Mammary epithelial cell (primary cell): ENCODE measurements at regions of chr19 and their contacts with region 1.

Region 1: DNA sequence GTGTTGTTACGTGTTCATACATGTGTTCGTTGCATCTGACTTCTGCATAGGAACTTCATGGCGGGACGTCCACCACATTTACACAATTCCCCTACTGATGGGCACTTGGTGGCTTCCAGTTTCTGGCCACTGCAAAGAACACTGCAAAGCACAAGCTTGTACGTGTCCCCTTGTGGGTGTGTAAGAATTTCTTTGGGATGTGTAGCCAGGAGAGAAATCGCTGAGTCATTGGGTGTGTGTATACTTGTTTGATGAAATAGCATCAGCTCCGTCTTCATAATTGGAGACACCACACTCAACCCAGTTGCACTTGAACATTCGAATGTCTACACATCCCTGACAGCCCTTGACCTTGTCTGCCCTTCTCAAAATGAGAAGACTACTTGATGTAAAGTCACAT is 19.2 kb downstream of the KLK5 start:
- DNase-seq: peak; percentile 93
- H3K4me3 ChIP-seq: no peak overlapping the region
- H3K27ac ChIP-seq: peak overlapping the region; percentile 97
- H3K4me1 ChIP-seq: peaks cover 33% of the 10 kb centered on the region
- H3K27me3 ChIP-seq: no peaks in the 10 kb centered on the region
- CTCF ChIP-seq: no peak

Region 2: DNA sequence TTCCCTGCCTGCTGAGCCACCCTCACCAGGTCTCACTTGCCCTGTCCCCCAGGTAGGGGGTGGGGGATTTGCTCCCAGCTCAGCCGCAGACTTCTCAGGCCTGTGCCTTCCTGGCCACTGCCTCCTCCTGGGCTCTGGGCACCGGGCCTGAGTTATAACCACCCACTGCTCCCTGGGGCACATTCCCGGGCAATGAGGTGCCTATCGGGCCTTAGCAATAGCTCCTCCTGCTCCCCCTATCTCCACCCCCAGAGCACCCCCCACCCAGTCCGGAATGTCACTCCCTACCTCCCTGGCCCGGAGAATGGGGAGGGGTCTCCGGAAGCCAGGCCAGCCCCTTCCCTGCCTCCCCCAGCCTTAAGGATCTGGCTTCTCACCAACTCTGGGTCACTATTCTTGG is 19.3 kb after region 1 on chr19 and contains the start of gene KLK5:
- CTCF ChIA-PET with region 1: no interaction called
- dilution Hi-C with region 1: no loop called
- in situ Hi-C with region 1: no loop called
- intact Hi-C with region 1: loop called (anchors 1 kb)
- DNase-seq: peak; percentile 75
- H3K4me3 ChIP-seq: peak within 1 kb of the TSS; percentile 52 to 73 (median 56)
- H3K27ac ChIP-seq: peak within 1 kb of the TSS; percentile 84
- H3K4me1 ChIP-seq: peaks cover 15% of the 10 kb centered on the region
- H3K27me3 ChIP-seq: no peaks in the 10 kb centered on the region
- CTCF ChIP-seq: peak in 1 of 2 donors; percentile 29
- total RNA-seq, gene KLK5: 485 to 1,207 TPM

Region 3: DNA sequence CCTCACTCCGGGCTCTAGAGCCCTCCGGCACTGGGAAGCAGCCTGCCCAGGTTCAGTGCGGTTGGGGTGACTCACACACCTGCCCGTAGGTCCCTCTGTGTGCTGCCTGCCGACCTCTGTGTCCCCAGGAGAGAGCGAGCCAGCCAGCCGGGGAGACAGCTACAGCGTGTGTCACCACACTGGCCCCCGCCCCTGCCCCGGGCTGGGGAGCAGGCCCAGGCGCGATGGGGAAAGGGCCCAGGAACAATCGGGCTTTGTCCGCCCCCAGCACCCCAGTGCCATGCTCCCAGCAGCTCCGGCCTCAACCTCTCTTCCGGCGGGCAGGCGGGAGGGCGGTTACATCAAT is 35.7 kb after region 1 on chr19 and contains the start of gene KLK6:
- CTCF ChIA-PET with region 1: no interaction called
- dilution Hi-C with region 1: no loop called
- in situ Hi-C with region 1: no loop called
- intact Hi-C with region 1: loop called (anchors 2 kb)
- DNase-seq: peak; percentile 95
- H3K4me3 ChIP-seq: no peak within 1 kb of the TSS
- H3K27ac ChIP-seq: peak within 1 kb of the TSS; percentile 83
- H3K4me1 ChIP-seq: peaks cover 25% of the 10 kb centered on the region
- H3K27me3 ChIP-seq: no peaks in the 10 kb centered on the region
- CTCF ChIP-seq: no peak
- total RNA-seq, gene KLK6: 12.7 to 175 TPM

Region 4: GRCh38 chr19:50994129-50994528 is 60.5 kb after region 1 on chr19:
- CTCF ChIA-PET with region 1: no interaction called
- dilution Hi-C with region 1: no loop called
- in situ Hi-C with region 1: no loop called
- intact Hi-C with region 1: loop called (anchors 1 kb)
- DNase-seq: peak; percentile 61
- H3K4me3 ChIP-seq: no peak overlapping the region
- H3K27ac ChIP-seq: peak overlapping the region; percentile 98
- H3K4me1 ChIP-seq: peaks cover 29% of the 10 kb centered on the region
- H3K27me3 ChIP-seq: no peaks in the 10 kb centered on the region
- CTCF ChIP-seq: no peak

Region 5: GRCh38 chr19:51010066-51010795 is 76.6 kb after region 1 on chr19:
- CTCF ChIA-PET with region 1: no interaction called
- dilution Hi-C with region 1: loop called (anchors 5 kb)
- in situ Hi-C with region 1: loop called (anchors 5 kb)
- intact Hi-C with region 1: no loop called
- DNase-seq: peak; percentile 92
- H3K4me3 ChIP-seq: no peak overlapping the region
- H3K27ac ChIP-seq: peak overlapping the region; percentile 86
- H3K4me1 ChIP-seq: peaks cover 42% of the 10 kb centered on the region
- H3K27me3 ChIP-seq: no peaks in the 10 kb centered on the region
- CTCF ChIP-seq: no peak